Activated CD8-positive, alpha-beta memory T cell treated with anti-CD3 and anti-CD28 coated beads, Interleukin-2, amount 10 ng/mL, durations not matched to agents 7 days and 5 days (primary cell): ENCODE measurements at regions of chr1 and their contacts with region 1.

Region 1: GRCh38 chr1:228165372-228166169 is at the start of gene IBA57:
- DNase-seq: peak; percentile 100
- ATAC-seq: peak; percentile 87
- H3K4me3 Mint-ChIP-seq: peak within 1 kb of the TSS; percentile 85
- H3K27ac Mint-ChIP-seq: peak within 1 kb of the TSS; percentile 95
- H3K4me1 Mint-ChIP-seq: peaks cover 36% of the 10 kb centered on the region
- H3K27me3 Mint-ChIP-seq: no peaks in the 10 kb centered on the region
- total RNA-seq, gene IBA57: 6.8 to 8.5 TPM

Region 2: GRCh38 chr1:227886993-227887696 is 278.4 kb before region 1 on chr1:
- CTCF ChIA-PET with region 1: no interaction called
- DNase-seq: peak; percentile 37
- ATAC-seq: no peak
- H3K4me3 Mint-ChIP-seq: no peak overlapping the region
- H3K27ac Mint-ChIP-seq: no peak overlapping the region
- H3K4me1 Mint-ChIP-seq: peaks cover 10% of the 10 kb centered on the region
- H3K27me3 Mint-ChIP-seq: no peaks in the 10 kb centered on the region

Region 3: DNA sequence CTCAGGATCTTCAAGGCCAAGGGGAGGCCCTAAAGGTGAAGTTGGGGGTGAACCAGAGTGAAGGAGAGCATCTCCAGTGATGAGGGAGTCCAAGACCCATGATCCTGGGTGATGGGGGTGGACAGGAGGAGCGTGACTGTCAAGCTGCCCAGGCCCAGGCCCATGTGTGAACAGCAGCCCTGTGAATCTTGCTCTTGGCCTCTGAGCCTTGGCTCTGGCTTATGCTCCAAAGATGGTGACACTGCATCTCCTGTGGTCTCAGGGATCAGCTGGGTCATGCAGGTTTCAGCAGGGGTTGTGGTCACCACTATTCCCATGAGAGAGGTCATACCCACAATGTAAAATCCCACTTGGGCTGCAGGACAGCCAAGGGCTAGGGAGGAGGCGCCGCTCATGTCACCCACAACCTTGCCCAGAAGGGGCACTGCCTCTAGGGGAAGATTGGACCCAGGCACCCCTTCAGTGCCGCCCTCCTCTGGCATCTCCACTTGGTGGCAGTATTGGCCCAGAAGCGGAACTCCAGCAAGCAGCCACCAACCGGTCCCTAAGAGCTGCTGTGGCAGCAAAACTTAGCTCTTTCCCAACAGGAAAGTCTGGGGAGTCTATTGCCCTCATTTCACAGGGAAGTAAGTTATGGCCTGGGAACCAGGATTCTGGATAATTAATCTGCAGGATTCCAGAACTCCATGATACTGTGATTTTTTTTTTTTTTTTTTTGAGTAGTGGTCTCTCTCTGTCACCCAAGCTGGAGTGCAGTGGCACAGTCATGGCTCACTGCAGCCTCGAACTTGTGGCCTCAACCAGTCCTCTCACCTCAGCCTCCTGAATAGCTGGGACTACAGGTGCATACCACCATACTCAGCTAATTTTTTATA is 166.3 kb before region 1 on chr1:
- CTCF ChIA-PET with region 1: interaction called, 10 read pairs
- DNase-seq: peak; percentile 77
- ATAC-seq: peak; percentile 90
- H3K4me3 Mint-ChIP-seq: no peak overlapping the region
- H3K27ac Mint-ChIP-seq: no peak overlapping the region
- H3K4me1 Mint-ChIP-seq: no peaks in the 10 kb centered on the region
- H3K27me3 Mint-ChIP-seq: peaks cover 32% of the 10 kb centered on the region

Region 4: DNA sequence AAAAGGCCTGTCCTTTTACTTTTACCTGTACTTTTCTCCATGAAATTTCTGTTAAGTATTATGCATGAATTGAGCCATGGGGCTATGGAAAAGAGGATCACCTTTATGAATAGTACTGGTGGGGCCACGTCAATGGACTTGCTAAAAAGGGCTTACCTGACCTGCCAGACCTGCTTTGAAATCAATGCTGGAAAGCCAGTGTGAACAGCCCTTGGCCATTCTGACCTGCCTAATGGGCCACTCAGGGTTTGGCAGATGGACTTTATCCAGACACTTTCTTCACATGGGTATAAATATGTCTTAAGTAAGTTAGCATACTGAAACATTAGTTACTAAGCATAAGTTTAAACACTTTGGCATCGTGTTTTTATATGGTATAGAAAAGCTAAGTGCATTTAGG is 33.8 kb before region 1 on chr1:
- CTCF ChIA-PET with region 1: interaction called, 62 read pairs
- DNase-seq: no peak
- ATAC-seq: no peak
- H3K4me3 Mint-ChIP-seq: no peak overlapping the region
- H3K27ac Mint-ChIP-seq: no peak overlapping the region
- H3K4me1 Mint-ChIP-seq: peaks cover 14% of the 10 kb centered on the region
- H3K27me3 Mint-ChIP-seq: peaks cover 22% of the 10 kb centered on the region

Region 5: GRCh38 chr1:228139944-228140656 is 25.5 kb before region 1 on chr1 and contains the start of gene GUK1:
- CTCF ChIA-PET with region 1: interaction called, 57 read pairs
- DNase-seq: peak; percentile 100
- ATAC-seq: peak; percentile 89
- H3K4me3 Mint-ChIP-seq: peak within 1 kb of the TSS; percentile 98
- H3K27ac Mint-ChIP-seq: peak within 1 kb of the TSS; percentile 99
- H3K4me1 Mint-ChIP-seq: peaks cover 48% of the 10 kb centered on the region
- H3K27me3 Mint-ChIP-seq: peaks cover 5% of the 10 kb centered on the region
- total RNA-seq, gene GUK1: 262 to 325 TPM

Region 6: DNA sequence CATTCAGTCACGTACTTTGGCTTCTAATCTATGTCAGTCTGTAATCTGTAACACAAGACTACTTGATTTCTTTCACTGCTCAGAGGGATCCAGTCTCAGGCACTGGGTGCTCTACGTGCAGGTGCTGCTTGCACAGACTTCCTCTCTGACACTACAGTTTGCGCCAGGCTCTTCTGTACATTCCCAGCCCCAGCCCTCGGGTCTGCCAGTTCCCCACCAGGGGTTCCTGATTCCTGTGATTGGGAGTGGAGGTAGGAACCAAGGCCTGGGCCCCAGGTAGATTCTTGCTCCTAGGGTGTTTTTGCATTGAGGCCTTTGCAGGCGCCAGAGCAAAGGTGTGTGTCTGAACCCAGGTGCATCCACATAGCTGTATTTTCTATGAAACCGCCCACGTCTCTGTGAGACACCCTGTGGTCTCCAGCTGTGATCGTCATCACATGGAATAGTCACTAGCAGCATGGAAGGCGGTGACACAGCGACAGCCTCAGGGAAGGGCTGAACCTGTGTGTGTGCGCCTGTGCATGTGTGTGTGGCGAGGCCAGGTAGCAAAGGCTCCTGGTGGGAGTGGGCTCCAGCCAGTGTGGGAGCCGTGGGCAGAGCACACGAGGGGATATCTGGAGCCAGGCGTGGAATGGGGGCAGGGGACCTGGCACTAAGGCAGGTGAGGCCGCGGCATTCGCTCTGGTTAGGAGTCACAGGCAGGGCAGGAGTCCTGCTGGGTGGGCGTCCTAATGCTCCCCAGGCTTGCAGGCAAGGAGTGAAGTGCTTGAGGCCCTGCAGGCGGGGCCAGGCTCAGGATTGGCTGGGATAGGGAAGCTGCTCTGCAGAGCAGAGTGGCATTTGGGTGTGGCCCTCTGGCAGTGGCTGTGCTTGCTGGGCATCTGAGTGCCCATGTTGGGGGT is 10.7 kb before region 1 on chr1:
- CTCF ChIA-PET with region 1: interaction called, 19 read pairs
- DNase-seq: no peak
- ATAC-seq: no peak
- H3K4me3 Mint-ChIP-seq: no peak overlapping the region
- H3K27ac Mint-ChIP-seq: no peak overlapping the region
- H3K4me1 Mint-ChIP-seq: peaks cover 21% of the 10 kb centered on the region
- H3K27me3 Mint-ChIP-seq: no peaks in the 10 kb centered on the region